ENCODE measurements at regions of chr2 and their contacts with region 1.

Region 1: DNA sequence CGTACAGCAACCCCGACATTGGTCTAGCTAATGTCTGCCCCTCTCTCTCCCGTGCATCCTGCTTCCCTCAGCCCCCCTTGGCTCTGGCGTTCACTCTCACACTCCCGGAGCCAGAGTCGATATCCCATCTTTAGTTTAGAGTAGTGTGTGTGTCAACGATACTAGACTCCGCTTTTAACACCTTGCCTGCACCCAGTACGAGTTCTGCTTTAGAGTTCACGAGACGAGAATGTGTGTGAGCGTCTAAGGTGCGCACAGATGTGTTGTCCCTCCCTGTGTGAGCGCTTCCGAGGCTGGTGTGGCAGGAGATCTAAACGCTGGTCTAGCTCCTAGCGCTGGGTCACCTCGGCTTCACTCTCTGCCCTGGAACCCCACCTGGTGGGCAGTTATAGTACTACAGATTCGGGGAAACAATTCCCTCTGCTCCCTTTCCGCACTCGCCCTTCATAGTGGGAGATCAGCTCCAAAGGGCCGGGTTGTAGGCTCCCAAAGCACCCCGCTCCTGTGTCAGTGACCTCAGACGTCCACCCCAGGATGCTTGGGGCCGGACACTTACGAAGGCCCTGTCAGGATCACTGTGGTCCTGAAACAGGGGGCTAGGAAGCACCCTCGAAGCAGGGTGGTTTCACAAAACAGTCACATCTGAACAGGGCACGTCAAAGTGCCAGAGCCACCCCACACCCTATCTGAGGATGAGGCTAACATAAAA is 2.6 kb upstream of the CYP26B1 start:
- DNase-seq: peak; percentile 92
- H3K4me3 ChIP-seq: peak overlapping the region; percentile 37
- H3K27ac ChIP-seq: no peak overlapping the region
- H3K4me1 ChIP-seq: peaks cover 24% of the 10 kb centered on the region
- H3K27me3 ChIP-seq: peaks cover 40% of the 10 kb centered on the region
- CTCF ChIP-seq: peak; percentile 75

Region 2: GRCh38 chr2:71801969-71802368 is 348.3 kb before region 1 on chr2:
- intact Hi-C with region 1: loop called (anchors 2 kb)
- DNase-seq: peak; percentile 65
- H3K4me3 ChIP-seq: no peak overlapping the region
- H3K27ac ChIP-seq: no peak overlapping the region
- H3K4me1 ChIP-seq: no peaks in the 10 kb centered on the region
- H3K27me3 ChIP-seq: no peaks in the 10 kb centered on the region
- CTCF ChIP-seq: peak; percentile 29

Region 3: GRCh38 chr2:72579591-72580180 is 429.4 kb after region 1 on chr2:
- intact Hi-C with region 1: loop called (anchors 5 kb)
- DNase-seq: no peak
- H3K4me3 ChIP-seq: no peak overlapping the region
- H3K27ac ChIP-seq: no peak overlapping the region
- H3K4me1 ChIP-seq: no peaks in the 10 kb centered on the region
- H3K27me3 ChIP-seq: no peaks in the 10 kb centered on the region
- CTCF ChIP-seq: peak; percentile 66

Region 4: DNA sequence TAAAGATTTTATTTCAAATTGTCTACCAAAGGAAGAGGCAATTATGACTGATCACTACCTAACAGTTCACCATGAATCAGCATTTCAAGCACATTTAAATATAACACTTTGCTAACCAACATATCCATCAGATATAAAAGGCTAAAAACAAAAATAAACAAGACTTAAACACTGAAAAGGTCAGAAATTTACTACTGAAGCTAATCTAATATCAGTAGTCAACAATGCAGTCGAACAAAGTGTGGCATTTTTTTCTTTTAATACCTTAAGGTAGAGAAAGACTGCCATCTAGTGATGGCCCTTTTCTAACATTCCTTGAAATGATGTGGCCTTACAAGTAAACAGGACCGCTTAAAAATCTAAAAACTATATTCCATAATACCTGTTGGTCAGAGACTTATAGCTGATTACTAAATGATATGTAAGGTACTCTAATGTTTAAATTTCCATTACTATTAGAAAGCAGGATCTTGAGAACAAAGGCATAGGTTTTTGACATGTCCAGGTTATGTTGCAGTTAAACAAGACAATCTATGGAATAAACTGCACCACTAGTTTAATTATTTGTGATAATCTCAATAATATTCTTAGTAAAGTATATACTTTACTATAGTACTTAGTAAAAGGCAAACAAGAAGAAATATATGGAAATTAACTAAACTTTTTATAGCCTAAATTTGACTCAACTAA is 595.5 kb after region 1 on chr2:
- intact Hi-C with region 1: loop called (anchors 10 kb)
- DNase-seq: no peak
- H3K4me3 ChIP-seq: no peak overlapping the region
- H3K27ac ChIP-seq: no peak overlapping the region
- H3K4me1 ChIP-seq: no peaks in the 10 kb centered on the region
- H3K27me3 ChIP-seq: no peaks in the 10 kb centered on the region
- CTCF ChIP-seq: peak; percentile 62